ENCODE measurements at regions of chr9 and their contacts with region 1.

Region 1: GRCh38 chr9:3240656-3241268 is 285.0 kb downstream of the RFX3 start:
- DNase-seq: peak; percentile 72
- H3K4me3 ChIP-seq: no peak overlapping the region
- H3K27ac ChIP-seq: no peak overlapping the region
- H3K4me1 ChIP-seq: peaks cover 6% of the 10 kb centered on the region
- H3K27me3 ChIP-seq: no peaks in the 10 kb centered on the region
- CTCF ChIP-seq: peak; percentile 95

Region 2: GRCh38 chr9:3441197-3441816 is 200.5 kb after region 1 on chr9:
- CTCF ChIA-PET with region 1: interaction called, 29 read pairs
- POLR2A ChIA-PET with region 1: no interaction called
- intact Hi-C with region 1: loop called (anchors 1 kb)
- DNase-seq: peak; percentile 76
- H3K4me3 ChIP-seq: no peak overlapping the region
- H3K27ac ChIP-seq: no peak overlapping the region
- H3K4me1 ChIP-seq: peaks cover 4% of the 10 kb centered on the region
- H3K27me3 ChIP-seq: no peaks in the 10 kb centered on the region
- CTCF ChIP-seq: peak; percentile 82